Heart left ventricle (tissue), 16 donors: ENCODE measurements at regions of chr20 and their contacts with region 1.

Region 1: GRCh38 chr20:10558635-10559187 is 115.1 kb downstream of the JAG1 start:
- DNase-seq: no peak
- ATAC-seq: peak in 1 of 4 donors; percentile 24
- H3K4me3 ChIP-seq: no peak overlapping the region
- H3K27ac ChIP-seq: peak overlapping the region in 6 of 12 donors; percentile 16 to 36 (median 30)
- H3K4me1 ChIP-seq: peaks cover 0 to 13% (median 0%) of the 10 kb centered on the region in 12 donors
- H3K27me3 ChIP-seq: no peaks in the 10 kb centered on the region
- CTCF ChIP-seq: peak in 2 of 12 donors; percentile 7 to 33
- POLR2A ChIP-seq: no peak

Region 2: GRCh38 chr20:10591956-10592521 is 33.3 kb after region 1 on chr20:
- intact Hi-C with region 1: no loop called
- DNase-seq: no peak
- ATAC-seq: peak in 2 of 4 donors; percentile 70 to 83
- H3K4me3 ChIP-seq: no peak overlapping the region
- H3K27ac ChIP-seq: peak overlapping the region in 8 of 12 donors; percentile 10 to 67 (median 40)
- H3K4me1 ChIP-seq: peaks cover 0 to 30% (median 9%) of the 10 kb centered on the region in 12 donors
- H3K27me3 ChIP-seq: no peaks in the 10 kb centered on the region
- CTCF ChIP-seq: no peak
- POLR2A ChIP-seq: no peak

Region 3: GRCh38 chr20:10603971-10604864 is 45.5 kb after region 1 on chr20:
- intact Hi-C with region 1: loop called in 2 of 10 experiments (anchors 5 kb)
- DNase-seq: peak; percentile 42 to 71 (median 64)
- ATAC-seq: peak; percentile 82 to 94 (median 89)
- H3K4me3 ChIP-seq: no peak overlapping the region
- H3K27ac ChIP-seq: peak overlapping the region; percentile 33 to 77 (median 71)
- H3K4me1 ChIP-seq: peaks cover 0 to 46% (median 8%) of the 10 kb centered on the region in 12 donors
- H3K27me3 ChIP-seq: no peaks in the 10 kb centered on the region
- CTCF ChIP-seq: no peak
- POLR2A ChIP-seq: no peak

Region 4: DNA sequence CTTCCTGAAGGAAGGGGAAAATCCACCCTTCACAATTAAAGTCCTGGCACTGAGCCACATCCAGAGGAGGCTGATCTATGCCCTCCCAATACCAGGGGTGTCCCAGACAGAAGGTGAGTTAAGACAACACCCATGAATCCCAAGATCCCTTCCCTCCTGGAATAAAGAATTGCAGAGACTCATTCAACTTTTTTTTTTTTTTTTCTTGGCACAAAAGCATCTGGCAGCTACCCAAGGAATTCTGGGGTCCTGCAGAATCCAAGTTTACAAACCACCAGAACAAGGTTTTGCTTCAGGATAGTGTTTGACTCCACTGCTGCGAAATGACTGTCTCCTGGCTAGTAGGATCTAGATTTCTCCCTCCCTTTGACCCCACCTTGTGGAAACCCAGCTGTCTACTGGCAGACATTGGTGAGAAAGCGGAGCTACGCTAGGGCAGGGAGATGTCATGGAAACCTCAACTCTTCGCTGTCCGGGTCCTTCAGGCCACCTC is 77.7 kb after region 1 on chr20:
- intact Hi-C with region 1: loop called in 1 of 10 experiments (anchors 5 kb)
- DNase-seq: peak in 1 of 5 donors; percentile 50
- ATAC-seq: peak; percentile 31 to 56 (median 40)
- H3K4me3 ChIP-seq: no peak overlapping the region
- H3K27ac ChIP-seq: peak overlapping the region; percentile 22 to 81 (median 62)
- H3K4me1 ChIP-seq: peaks cover 7 to 87% (median 56%) of the 10 kb centered on the region in 12 donors
- H3K27me3 ChIP-seq: no peaks in the 10 kb centered on the region
- CTCF ChIP-seq: no peak
- POLR2A ChIP-seq: no peak

Region 5: GRCh38 chr20:10654630-10655029 is 95.9 kb after region 1 on chr20:
- intact Hi-C with region 1: loop called in 4 of 10 experiments (anchors 5 to 10 kb)
- DNase-seq: no peak
- ATAC-seq: peak; percentile 27 to 29 (median 28)
- H3K4me3 ChIP-seq: peak overlapping the region in 1 of 12 donors; percentile 9
- H3K27ac ChIP-seq: peak overlapping the region in 11 of 12 donors; percentile 54 to 80 (median 65)
- H3K4me1 ChIP-seq: peaks cover 11 to 99% (median 77%) of the 10 kb centered on the region in 12 donors
- H3K27me3 ChIP-seq: no peaks in the 10 kb centered on the region
- CTCF ChIP-seq: no peak
- POLR2A ChIP-seq: no peak

Region 6: GRCh38 chr20:10660661-10661060 is 102.0 kb after region 1 on chr20:
- intact Hi-C with region 1: loop called in 4 of 10 experiments (anchors 5 to 10 kb)
- DNase-seq: peak in 2 of 5 donors; percentile 18 to 48
- ATAC-seq: peak in 3 of 4 donors; percentile 50 to 77 (median 66)
- H3K4me3 ChIP-seq: no peak overlapping the region
- H3K27ac ChIP-seq: peak overlapping the region in 9 of 12 donors; percentile 6 to 74 (median 52)
- H3K4me1 ChIP-seq: peaks cover 3 to 95% (median 62%) of the 10 kb centered on the region in 12 donors
- H3K27me3 ChIP-seq: no peaks in the 10 kb centered on the region
- CTCF ChIP-seq: no peak
- POLR2A ChIP-seq: no peak